ENCODE measurements at regions of chr16 and their contacts with region 1.

Region 1: DNA sequence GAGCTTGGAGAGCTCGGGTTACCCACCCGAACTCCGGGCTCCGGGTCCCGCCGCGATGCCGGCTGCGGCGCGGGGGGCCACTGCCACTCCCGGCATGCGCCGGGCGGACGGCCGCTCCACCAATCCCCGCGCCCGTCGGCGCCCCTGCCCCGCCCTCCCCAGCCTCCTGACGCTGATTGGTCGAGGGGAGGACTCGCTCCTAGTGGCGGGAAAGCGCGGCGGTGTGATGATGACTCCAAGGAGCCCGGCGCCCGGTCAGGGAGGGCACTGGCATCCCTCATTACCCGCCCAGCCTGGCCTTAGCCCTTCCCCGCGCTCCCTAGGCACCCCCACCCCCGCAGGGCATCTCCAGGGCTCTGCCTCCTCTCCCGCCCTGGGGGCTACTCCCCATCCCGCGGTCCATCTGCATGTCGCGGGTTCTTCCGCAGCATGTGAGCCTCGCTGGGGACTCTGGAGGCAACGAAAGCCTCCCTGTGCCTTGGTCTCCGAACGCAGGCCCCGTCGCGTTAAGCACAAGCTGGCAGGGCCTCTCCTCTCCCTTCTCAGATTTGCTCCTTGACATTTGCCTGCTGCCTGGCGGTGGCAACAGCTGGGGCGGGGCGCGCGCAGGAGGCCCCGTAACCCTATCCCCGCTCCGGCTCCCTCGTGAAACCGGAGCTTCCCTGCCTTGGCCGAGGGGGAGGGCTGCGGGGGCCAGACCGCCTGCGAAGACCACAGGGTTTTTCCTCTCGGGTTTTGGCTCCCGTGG is 1.7 kb downstream of the ATP2A1 start:
- DNase-seq: peak; percentile 67 to 89
- H3K4me3 ChIP-seq: peak overlapping the region; percentile 61 to 78 (median 68)
- H3K27ac ChIP-seq: peak overlapping the region; percentile 59; the same call in 1 of the 2 replicates
- H3K4me1 ChIP-seq: peaks cover 0 to 41% (median 30%) of the 10 kb centered on the region in 4 experiments; a peak in 6 of 7 replicates
- H3K27me3 ChIP-seq: peaks cover 0 to 8% (median 7%) of the 10 kb centered on the region in 4 experiments; a peak in 2 of 7 replicates
- CTCF ChIP-seq: no peak
- EP300 ChIP-seq: no peak
- POLR2A ChIP-seq: peak in 1 of 2 experiments; percentile 46; a peak in 1 of 3 replicates
- RAD21 ChIP-seq: no peak

Region 2: GRCh38 chr16:28606291-28607115 is 273.5 kb before region 1 on chr16:
- CTCF ChIA-PET with region 1: no interaction called
- POLR2A ChIA-PET with region 1: no interaction called
- DNase-seq: no peak
- H3K4me3 ChIP-seq: no peak overlapping the region
- H3K27ac ChIP-seq: no peak overlapping the region
- H3K4me1 ChIP-seq: peaks cover 0 to 16% (median 6%) of the 10 kb centered on the region in 4 experiments; a peak in 3 of 7 replicates
- H3K27me3 ChIP-seq: no peaks in the 10 kb centered on the region
- CTCF ChIP-seq: no peak
- EP300 ChIP-seq: no peak
- POLR2A ChIP-seq: no peak
- RAD21 ChIP-seq: no peak

Region 3: GRCh38 chr16:28823872-28824716 is 55.9 kb before region 1 on chr16:
- CTCF ChIA-PET with region 1: no interaction called
- POLR2A ChIA-PET with region 1: interaction called, 12 read pairs
- DNase-seq: peak; percentile 92 to 95
- H3K4me3 ChIP-seq: peak overlapping the region; percentile 88 to 97 (median 92)
- H3K27ac ChIP-seq: peak overlapping the region; percentile 96
- H3K4me1 ChIP-seq: peaks cover 0 to 3% (median under 1%) of the 10 kb centered on the region in 4 experiments; a peak in 3 of 7 replicates
- H3K27me3 ChIP-seq: no peaks in the 10 kb centered on the region
- CTCF ChIP-seq: no peak
- EP300 ChIP-seq: no peak
- POLR2A ChIP-seq: peak; percentile 24 to 82
- RAD21 ChIP-seq: no peak

Region 4: GRCh38 chr16:28846080-28846932 is 33.7 kb before region 1 on chr16 and contains the start of gene TUFM:
- CTCF ChIA-PET with region 1: interaction called, 3 read pairs
- POLR2A ChIA-PET with region 1: interaction called, 164 read pairs
- DNase-seq: peak; percentile 95 to 98
- H3K4me3 ChIP-seq: peak within 1 kb of the TSS; percentile 87 to 99 (median 98)
- H3K27ac ChIP-seq: peak within 1 kb of the TSS; percentile 70; the same call in 1 of the 2 replicates
- H3K4me1 ChIP-seq: peaks cover 0 to 7% (median 3%) of the 10 kb centered on the region in 4 experiments; a peak in 5 of 7 replicates
- H3K27me3 ChIP-seq: no peaks in the 10 kb centered on the region
- CTCF ChIP-seq: peak; percentile 83 to 93 (median 86)
- EP300 ChIP-seq: peak in 1 of 2 experiments; percentile 88; a peak in 2 of 3 replicates
- POLR2A ChIP-seq: no peak; a peak in 1 of 3 replicates
- RAD21 ChIP-seq: peak; percentile 32 to 36; a peak in 3 of 4 replicates
- total RNA-seq, gene TUFM: 243 and 249 TPM in 2 replicates

Region 5: GRCh38 chr16:28950648-28951409 is 70.8 kb after region 1 on chr16 and contains the start of gene NFATC2IP:
- CTCF ChIA-PET with region 1: interaction called, 42 read pairs
- POLR2A ChIA-PET with region 1: interaction called, 17 read pairs
- DNase-seq: peak; percentile 99
- H3K4me3 ChIP-seq: peak within 1 kb of the TSS; percentile 76 to 98 (median 77)
- H3K27ac ChIP-seq: no peak within 1 kb of the TSS; the same call in 1 of the 2 replicates
- H3K4me1 ChIP-seq: peaks cover 0 to 7% (median under 1%) of the 10 kb centered on the region in 4 experiments; a peak in 3 of 7 replicates
- H3K27me3 ChIP-seq: no peaks in the 10 kb centered on the region
- CTCF ChIP-seq: no peak
- EP300 ChIP-seq: no peak
- POLR2A ChIP-seq: peak in 1 of 2 experiments; percentile 47; a peak in 1 of 3 replicates
- RAD21 ChIP-seq: no peak
- total RNA-seq, gene NFATC2IP: 54.4 and 56.0 TPM in 2 replicates

Measured in H1 (cell line).